PC-9 (cell line): ENCODE measurements at regions of chr15 and their contacts with region 1.

Region 1: DNA sequence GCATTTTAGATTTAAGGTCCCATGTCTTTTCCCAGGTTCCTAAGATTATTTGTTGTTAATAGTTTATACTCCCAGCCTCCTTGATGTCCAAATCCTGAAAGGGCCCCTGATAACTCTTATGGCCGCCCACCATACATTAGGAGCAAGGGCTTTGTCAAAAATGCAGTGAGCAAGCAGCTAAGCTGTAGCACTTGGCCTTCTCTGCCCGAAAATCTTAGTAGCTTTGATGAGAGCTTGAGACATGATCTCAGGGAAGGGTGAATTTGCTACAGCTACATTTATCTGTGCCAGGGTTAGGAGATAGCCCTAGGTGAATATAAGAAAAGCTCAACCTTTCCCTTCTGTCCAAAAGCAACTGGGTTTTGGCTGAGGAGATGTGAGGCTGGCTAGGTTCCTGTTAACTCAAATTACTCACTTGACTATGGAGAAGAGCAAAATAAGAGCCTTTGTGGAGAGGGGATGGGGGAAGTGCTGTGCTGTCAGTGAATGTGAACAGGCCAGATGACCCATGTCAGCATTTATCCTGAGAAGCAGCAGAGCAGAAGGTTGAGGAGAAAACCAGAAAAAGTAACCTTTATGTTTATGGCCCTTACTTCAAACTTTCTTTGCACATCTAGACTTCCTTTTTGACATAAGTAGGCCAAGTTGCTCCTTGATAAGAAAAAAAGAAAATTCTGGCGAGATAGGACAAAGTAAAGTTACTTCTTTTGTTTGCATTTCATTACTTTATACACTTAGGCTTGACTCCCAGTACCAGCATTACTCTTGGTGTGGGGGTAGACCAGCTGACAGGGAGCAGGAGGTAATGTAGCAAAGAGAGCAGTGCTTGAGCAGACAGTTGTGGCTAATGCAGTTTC is 21.1 kb downstream of the MAPK6 start:
- DNase-seq: no peak
- H3K4me3 ChIP-seq: no peak overlapping the region
- H3K27ac ChIP-seq: peak overlapping the region; percentile 19; the same call in 1 of the 2 replicates
- H3K4me1 ChIP-seq: no peaks in the 10 kb centered on the region; the same call in 1 of the 2 replicates
- H3K27me3 ChIP-seq: no peaks in the 10 kb centered on the region
- CTCF ChIP-seq: no peak

Region 2: GRCh38 chr15:51227940-51228783 is 812.0 kb before region 1 on chr15:
- CTCF ChIA-PET with region 1: no interaction called
- POLR2A ChIA-PET with region 1: interaction called, 25 read pairs
- intact Hi-C with region 1: no loop called
- DNase-seq: peak; percentile 27 to 53
- H3K4me3 ChIP-seq: no peak overlapping the region
- H3K27ac ChIP-seq: no peak overlapping the region
- H3K4me1 ChIP-seq: peaks cover 6% of the 10 kb centered on the region
- H3K27me3 ChIP-seq: no peaks in the 10 kb centered on the region
- CTCF ChIP-seq: no peak